OCI-LY7 (cell line): ENCODE measurements at regions of chr11 and their contacts with region 1.

Region 1: DNA sequence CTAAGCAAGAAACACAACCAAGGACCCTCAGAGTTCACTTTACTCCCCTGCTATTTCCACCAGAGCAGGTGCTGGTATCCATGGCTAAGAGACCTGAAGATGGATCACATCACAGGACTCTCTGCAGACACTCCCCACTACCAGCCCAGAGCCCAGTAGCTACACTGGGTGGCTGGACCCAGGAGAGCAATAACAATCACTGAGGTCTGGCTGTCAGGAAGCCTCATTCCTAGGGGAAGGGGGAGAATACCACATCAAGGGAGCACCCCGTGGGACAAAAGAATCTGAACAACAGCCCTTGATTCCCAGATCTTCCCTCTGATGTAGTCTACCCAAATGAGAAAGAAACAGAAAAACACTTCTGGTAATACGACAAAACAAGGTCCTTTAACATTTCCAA is 9.0 kb upstream of the MMP7 start:
- DNase-seq: no peak
- H3K4me3 ChIP-seq: no peak overlapping the region
- H3K27ac ChIP-seq: no peak overlapping the region
- H3K4me1 ChIP-seq: peaks cover 16% of the 10 kb centered on the region
- CTCF ChIP-seq: no peak

Region 2: GRCh38 chr11:102553835-102554282 is 14.3 kb after region 1 on chr11:
- CTCF ChIA-PET with region 1: interaction called, 6 read pairs
- POLR2A ChIA-PET with region 1: interaction called, 11 read pairs
- intact Hi-C with region 1: no loop called
- DNase-seq: no peak
- H3K4me3 ChIP-seq: no peak overlapping the region
- H3K27ac ChIP-seq: no peak overlapping the region
- H3K4me1 ChIP-seq: peaks cover 3% of the 10 kb centered on the region
- CTCF ChIP-seq: no peak